Transverse colon (tissue), 4 donors: ENCODE measurements at regions of chr16 and their contacts with region 1.

Region 1: GRCh38 chr16:1464530-1465219 is 10.2 kb downstream of the CLCN7 start:
- DNase-seq: no peak
- H3K4me3 ChIP-seq: no peak overlapping the region
- H3K27ac ChIP-seq: no peak overlapping the region
- H3K4me1 ChIP-seq: peaks cover 0 to 4% (median 0%) of the 10 kb centered on the region in 4 donors
- H3K27me3 ChIP-seq: no peaks in the 10 kb centered on the region
- CTCF ChIP-seq: no peak
- EP300 ChIP-seq: no peak
- POLR2A ChIP-seq: no peak

Region 2: DNA sequence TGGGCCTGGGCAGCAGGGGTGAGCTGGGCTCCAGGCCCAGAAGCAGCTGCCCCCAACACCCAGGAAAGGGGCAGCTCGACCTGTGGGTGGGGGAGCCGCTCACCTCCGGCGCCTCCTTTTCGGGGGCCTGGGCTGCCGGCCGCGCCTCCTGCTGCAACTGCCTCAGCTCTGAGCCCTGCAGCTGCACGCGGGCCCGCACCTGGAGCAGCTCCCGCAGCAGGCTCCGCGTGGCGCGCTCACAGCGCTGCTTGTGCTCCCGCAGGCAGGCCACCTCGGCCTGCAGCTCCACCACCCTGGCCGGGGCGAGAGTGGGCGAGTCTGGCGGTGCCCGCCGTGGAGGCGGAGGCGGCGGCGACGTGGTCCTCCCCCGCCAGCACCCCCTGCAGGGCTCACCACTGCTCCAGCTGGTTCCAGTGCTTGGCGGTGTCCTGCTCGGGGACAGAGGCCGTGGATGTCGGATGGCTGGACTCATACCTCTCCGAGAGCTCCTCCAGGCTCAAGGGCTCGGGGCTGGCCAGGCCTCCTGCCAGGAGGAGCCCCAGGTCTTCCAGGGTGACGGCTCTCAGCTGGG is 21.2 kb before region 1 on chr16:
- in situ Hi-C with region 1: no loop called
- intact Hi-C with region 1: no loop called
- DNase-seq: no peak
- H3K4me3 ChIP-seq: no peak overlapping the region
- H3K27ac ChIP-seq: no peak overlapping the region
- H3K4me1 ChIP-seq: no peaks in the 10 kb centered on the region
- H3K27me3 ChIP-seq: no peaks in the 10 kb centered on the region
- CTCF ChIP-seq: no peak
- EP300 ChIP-seq: no peak
- POLR2A ChIP-seq: no peak

Region 3: DNA sequence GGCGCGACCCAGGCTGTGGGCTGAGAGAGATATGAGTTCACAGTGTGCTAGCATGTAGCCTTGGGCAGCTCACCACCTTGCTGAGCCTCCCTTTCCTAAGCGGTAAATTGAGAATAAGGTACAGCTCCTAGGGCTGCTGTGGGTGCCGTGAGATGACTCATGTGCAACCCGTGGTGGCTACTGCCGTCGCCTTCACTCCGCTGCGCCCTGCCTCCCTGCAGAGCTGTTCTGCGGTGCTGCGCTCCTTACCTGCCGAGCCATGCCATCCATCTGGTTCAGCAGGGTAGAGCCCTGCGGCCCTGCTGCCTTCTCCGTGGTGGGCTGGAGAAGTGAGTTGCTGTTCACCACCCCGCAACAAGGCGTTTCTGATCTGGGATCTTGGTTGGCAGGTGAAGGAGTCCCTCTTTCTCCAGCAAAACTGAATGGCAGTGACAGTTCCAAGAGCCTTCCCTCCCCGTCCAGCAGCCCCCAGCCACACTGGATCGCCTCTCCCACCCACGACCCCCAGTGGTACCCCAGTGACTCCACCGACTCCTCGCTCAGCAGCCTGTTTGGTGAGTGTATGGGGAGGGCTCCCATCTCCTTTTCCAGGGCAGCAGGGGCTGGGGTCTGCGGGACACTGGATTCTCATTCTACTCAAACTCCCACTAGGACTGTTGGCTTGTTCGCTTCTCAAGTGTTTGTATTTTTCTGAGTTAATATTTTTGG is 204.1 kb after region 1 on chr16:
- in situ Hi-C with region 1: no loop called
- intact Hi-C with region 1: loop called (anchors 1 kb)
- DNase-seq: no peak
- H3K4me3 ChIP-seq: no peak overlapping the region
- H3K27ac ChIP-seq: no peak overlapping the region
- H3K4me1 ChIP-seq: no peaks in the 10 kb centered on the region
- H3K27me3 ChIP-seq: no peaks in the 10 kb centered on the region
- CTCF ChIP-seq: no peak
- EP300 ChIP-seq: no peak
- POLR2A ChIP-seq: no peak